Calu3 (cell line): ENCODE measurements at regions of chr10 and their contacts with region 1.

Region 1: DNA sequence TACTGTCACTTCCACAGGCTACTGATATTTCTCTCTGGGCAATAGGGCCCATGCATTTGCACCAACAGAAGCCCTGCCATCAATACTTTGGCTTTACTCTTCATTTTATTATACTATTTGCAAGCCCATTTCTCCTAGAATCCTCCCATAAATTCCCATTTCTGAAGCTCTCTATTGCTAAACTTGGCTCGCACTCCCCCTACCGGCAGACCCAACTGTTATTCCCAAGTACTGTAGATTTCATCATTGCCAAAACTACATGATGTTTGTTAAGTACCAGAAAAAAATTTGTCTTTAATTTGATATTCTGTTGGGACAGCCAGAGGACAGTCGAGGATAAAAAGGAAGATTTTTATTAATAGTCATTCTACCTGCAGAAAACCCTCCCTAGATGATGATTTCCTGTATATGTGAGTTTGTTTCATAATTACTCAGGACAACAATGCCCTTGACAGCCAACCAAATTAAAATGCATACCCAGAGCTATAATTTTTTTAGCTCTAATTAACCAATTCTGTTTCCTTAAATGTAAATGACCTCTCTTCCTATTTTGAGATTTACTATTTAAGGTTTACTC is 298.6 kb downstream of the REEP3 start:
- DNase-seq: peak; percentile 84
- H3K4me3 Mint-ChIP-seq: no peak overlapping the region
- H3K27ac Mint-ChIP-seq: no peak overlapping the region
- H3K4me1 Mint-ChIP-seq: no peaks in the 10 kb centered on the region
- H3K27me3 Mint-ChIP-seq: peaks cover 41% of the 10 kb centered on the region
- CTCF ChIP-seq: peak; percentile 88

Region 2: DNA sequence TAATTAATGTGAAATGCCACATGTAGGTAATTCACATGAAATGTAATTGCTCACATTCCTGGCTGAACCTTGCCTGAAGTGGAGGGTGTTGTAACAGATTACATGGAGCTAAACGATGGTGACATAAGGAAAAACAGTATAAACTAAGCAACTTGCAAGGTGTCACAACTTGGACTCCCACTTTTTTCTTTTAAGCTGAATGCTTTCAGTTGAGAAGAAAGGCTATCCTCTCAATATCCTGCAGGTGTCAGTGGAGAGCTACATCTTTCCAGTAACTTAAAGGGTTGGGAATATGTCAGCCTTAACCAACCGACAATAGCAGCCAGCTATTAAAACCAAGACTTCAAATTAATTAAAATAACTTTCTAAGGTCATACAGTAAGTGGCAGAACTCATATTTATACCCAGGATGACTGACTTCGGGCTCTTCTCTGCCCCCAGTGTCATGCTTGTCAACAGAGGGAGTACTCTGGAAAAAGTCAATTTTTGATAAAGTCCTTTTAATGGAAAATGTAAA is 653.0 kb before region 1 on chr10:
- CTCF ChIA-PET with region 1: interaction called, 3 read pairs
- intact Hi-C with region 1: loop called (anchors 2 kb)
- DNase-seq: peak; percentile 60
- H3K4me3 Mint-ChIP-seq: no peak overlapping the region
- H3K27ac Mint-ChIP-seq: no peak overlapping the region
- H3K4me1 Mint-ChIP-seq: no peaks in the 10 kb centered on the region
- H3K27me3 Mint-ChIP-seq: no peaks in the 10 kb centered on the region
- CTCF ChIP-seq: peak; percentile 55

Region 3: GRCh38 chr10:63763738-63764137 is 56.1 kb before region 1 on chr10:
- CTCF ChIA-PET with region 1: no interaction called
- intact Hi-C with region 1: no loop called
- DNase-seq: no peak
- H3K4me3 Mint-ChIP-seq: no peak overlapping the region
- H3K27ac Mint-ChIP-seq: no peak overlapping the region
- H3K4me1 Mint-ChIP-seq: peaks cover 8% of the 10 kb centered on the region
- H3K27me3 Mint-ChIP-seq: peaks cover 28% of the 10 kb centered on the region
- CTCF ChIP-seq: no peak